Sigmoid colon (tissue), 7 donors: ENCODE measurements at regions of chr7 and their contacts with region 1.

Region 1: GRCh38 chr7:149261829-149262617 is at the start of gene ZNF783:
- DNase-seq: peak; percentile 93
- H3K4me3 ChIP-seq: peak within 1 kb of the TSS; percentile 28 to 75 (median 64)
- H3K27ac ChIP-seq: peak within 1 kb of the TSS; percentile 90 to 97 (median 93)
- H3K4me1 ChIP-seq: peaks cover 0 to 26% (median 22%) of the 10 kb centered on the region in 4 donors
- H3K27me3 ChIP-seq: no peaks in the 10 kb centered on the region
- CTCF ChIP-seq: peak in 2 of 4 experiments; percentile 31 to 87
- EP300 ChIP-seq: no peak
- POLR2A ChIP-seq: no peak
- total RNA-seq, gene ZNF783: 8.4 to 15.2 (median 11.3) TPM

Region 2: GRCh38 chr7:148983187-148984146 is 278.6 kb before region 1 on chr7:
- intact Hi-C with region 1: no loop called
- DNase-seq: no peak
- H3K4me3 ChIP-seq: peak overlapping the region; percentile 40 to 72 (median 60)
- H3K27ac ChIP-seq: peak overlapping the region; percentile 29 to 59 (median 48)
- H3K4me1 ChIP-seq: peaks cover 0 to 35% (median 27%) of the 10 kb centered on the region in 4 donors
- H3K27me3 ChIP-seq: no peaks in the 10 kb centered on the region
- CTCF ChIP-seq: no peak
- EP300 ChIP-seq: no peak
- POLR2A ChIP-seq: no peak

Region 3: DNA sequence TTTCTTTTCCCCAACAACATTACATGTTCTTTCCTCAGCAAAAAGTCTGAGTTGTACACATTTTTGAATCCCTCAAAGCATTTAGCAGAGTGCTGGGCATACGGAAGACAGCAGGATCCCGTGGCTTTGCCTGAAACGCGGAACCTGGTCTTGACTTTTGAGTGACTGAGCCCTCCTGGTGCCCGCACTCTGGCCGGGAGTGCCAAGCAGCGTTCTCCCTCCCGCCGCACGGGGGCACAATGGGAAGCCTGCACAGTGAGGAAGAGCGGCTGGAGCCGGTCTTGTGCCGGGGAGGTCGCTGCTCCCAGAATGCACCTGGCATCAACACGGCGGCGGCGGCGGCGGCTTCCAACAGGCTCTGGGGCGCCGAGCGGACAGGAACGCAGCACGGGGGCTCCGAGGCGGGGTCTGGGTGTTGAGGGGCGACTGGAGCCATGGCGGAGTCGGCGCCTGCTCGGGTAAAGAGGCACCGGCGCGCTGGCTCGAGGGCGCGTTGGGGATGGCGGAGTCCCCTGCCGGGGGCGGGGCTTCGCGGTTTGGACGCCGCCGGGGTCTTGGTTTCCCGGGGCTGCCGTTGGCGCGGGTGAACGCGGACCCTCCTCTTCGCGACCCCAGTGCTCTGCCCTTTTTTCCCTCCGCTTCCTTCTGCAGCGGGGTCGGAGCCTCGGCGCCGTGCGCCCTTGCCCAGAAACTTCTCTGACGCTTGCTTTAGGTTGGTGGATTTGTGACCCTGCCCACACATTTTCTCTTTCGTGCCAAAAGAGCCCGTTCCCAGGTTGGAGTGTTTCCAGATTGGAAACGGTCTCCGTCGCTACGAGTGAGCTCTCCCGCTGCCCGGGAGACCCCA is 22.5 kb before region 1 on chr7 and contains the start of gene ZNF212:
- intact Hi-C with region 1: loop called (anchors 2 kb)
- DNase-seq: peak; percentile 92
- H3K4me3 ChIP-seq: peak within 1 kb of the TSS; percentile 69 to 86 (median 78)
- H3K27ac ChIP-seq: peak within 1 kb of the TSS; percentile 64 to 81 (median 72)
- H3K4me1 ChIP-seq: peaks cover 0 to 22% (median 17%) of the 10 kb centered on the region in 4 donors
- H3K27me3 ChIP-seq: peaks cover 0 to 2% (median 0%) of the 10 kb centered on the region in 3 donors
- CTCF ChIP-seq: peak; percentile 64 to 80 (median 70)
- EP300 ChIP-seq: no peak
- POLR2A ChIP-seq: no peak
- total RNA-seq, gene ZNF212: 4.1 to 13.6 (median 5.7) TPM

Region 4: DNA sequence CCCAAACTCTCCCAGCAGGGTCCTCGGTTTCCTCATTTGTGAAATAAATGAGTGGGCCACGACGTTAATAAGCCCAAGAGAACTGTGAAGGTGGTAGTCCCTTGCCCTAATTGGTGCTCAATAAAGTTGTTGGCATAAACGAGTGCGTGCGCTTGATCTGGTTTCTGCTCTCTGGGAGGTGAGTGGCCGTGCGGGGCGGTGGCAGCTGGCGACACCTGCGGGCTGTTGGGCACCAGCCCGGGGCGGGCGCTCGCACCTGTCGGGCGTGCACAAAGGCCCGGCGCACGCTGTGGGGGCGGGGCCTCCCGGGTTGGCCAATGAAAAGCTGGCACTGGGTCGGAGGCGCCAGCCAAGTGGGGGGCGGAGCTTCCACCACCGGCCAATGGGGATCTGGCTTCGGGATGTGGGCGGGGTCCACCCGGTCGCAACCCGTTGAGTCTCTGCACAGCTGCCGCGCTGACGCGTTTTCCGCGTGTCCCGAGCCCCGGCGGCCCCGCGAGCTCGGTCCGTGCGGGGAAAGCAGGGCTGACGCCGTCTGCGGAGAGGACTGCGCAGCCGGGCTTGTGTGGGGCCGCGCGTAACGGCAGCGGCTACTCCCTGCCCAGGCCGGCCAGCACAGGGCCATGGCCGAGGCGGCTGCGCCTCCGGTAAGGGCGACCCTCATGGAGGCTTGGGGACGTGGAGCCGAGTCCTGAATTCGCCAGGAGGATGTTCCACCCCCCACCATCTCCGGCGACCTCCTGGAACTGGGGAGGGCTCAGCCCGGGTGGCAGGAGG is 23.0 kb after region 1 on chr7:
- intact Hi-C with region 1: no loop called
- DNase-seq: peak; percentile 96
- H3K4me3 ChIP-seq: peak overlapping the region; percentile 35 to 65 (median 53)
- H3K27ac ChIP-seq: peak overlapping the region; percentile 43 to 61 (median 52)
- H3K4me1 ChIP-seq: peaks cover 0 to 17% (median 8%) of the 10 kb centered on the region in 4 donors
- H3K27me3 ChIP-seq: no peaks in the 10 kb centered on the region
- CTCF ChIP-seq: no peak
- EP300 ChIP-seq: no peak
- POLR2A ChIP-seq: no peak

Region 5: DNA sequence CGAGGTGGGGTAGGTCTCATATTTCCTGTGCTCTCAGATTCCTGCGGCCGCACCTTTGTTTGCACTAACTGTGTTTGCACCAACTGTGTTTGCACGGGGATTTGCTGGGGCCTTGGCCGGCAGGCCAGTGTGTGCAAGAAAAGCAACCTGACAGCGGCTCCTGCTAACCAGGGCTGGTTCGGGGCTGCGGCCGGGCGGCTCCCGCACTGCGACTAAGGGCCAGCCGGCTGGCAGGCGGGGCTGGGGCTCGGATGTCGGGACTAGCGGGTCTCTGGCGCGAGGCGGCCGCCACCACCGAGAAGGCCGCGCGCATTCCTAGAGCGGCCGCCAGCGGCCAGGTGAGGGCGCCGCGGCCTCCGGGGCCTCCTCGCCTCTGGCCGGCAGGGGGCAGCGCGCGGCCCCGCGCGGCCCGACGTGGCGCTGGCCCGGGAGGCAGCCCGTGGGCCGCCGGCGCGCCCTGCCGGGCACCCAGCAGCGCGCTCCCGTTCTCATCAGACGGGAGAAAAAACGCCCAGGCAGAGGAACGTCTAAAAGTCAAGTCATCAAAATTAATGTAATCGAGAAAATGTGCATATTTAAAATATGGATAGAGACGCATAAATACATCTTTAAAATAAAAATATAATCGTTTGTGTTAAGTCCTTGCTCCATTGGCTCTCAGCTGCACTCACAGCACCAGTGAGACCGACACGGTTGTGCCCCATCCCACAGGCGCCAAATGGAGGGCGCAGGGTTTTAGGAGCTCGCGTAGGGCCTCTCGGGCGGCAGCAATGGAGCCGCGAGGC is 160.3 kb after region 1 on chr7:
- intact Hi-C with region 1: loop called (anchors 2 kb)
- DNase-seq: no peak
- H3K4me3 ChIP-seq: peak overlapping the region; percentile 29 to 52 (median 46)
- H3K27ac ChIP-seq: peak overlapping the region in 3 of 4 donors; percentile 5 to 27 (median 21)
- H3K4me1 ChIP-seq: peaks cover 0 to 16% (median 12%) of the 10 kb centered on the region in 4 donors
- H3K27me3 ChIP-seq: peaks cover 0 to 11% (median 0%) of the 10 kb centered on the region in 3 donors
- CTCF ChIP-seq: peak in 1 of 4 experiments; percentile 36
- EP300 ChIP-seq: no peak
- POLR2A ChIP-seq: no peak

Region 6: DNA sequence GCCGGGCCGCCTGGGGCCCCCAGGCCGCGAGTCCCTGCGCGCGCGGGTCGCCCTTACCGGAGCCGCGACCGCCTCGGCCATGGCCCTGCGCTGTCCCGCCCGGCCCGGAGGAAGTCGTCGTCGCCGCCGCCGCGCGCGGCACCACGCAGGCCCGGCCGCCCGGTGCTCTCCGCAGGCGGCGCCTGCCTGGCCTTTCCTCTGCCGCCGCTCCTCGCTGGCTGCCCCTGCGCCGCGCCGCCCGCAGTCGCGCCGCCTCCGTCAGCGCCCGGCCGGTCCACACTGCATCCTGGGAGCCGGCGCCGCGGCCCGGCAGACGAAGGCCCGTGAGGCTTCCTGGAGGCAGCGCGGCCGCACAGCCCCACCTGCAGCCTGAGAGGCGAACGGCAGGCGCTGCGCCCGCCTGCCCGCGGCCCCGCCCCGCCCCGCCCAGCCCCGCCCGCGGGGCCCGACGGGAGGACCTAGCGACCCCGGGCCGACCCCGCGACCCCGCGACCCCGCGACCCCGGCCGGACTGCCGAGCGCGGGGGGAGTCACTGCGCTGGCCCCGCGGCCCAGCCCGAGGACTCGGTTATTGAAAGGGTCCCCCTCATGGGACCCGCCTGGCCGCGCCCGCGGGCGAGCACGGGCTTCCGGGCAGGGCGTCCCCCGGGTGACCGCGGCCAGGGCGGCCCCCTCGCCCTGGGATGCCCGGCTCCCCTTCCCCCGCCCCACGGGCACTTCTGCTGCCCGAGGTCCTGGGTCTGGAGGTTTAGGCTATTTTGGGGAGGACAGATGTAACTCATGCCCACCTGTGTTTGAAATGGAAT is 235.6 kb after region 1 on chr7 and contains the start of gene ZNF746:
- intact Hi-C with region 1: loop called (anchors 1 kb)
- DNase-seq: peak; percentile 89
- H3K4me3 ChIP-seq: peak within 1 kb of the TSS; percentile 61 to 93 (median 84)
- H3K27ac ChIP-seq: peak within 1 kb of the TSS; percentile 84 to 96 (median 94)
- H3K4me1 ChIP-seq: peaks cover 0 to 24% (median 20%) of the 10 kb centered on the region in 4 donors
- H3K27me3 ChIP-seq: no peaks in the 10 kb centered on the region
- CTCF ChIP-seq: peak in 1 of 4 experiments; percentile 47
- EP300 ChIP-seq: no peak
- POLR2A ChIP-seq: no peak
- total RNA-seq, gene ZNF746: 16.4 to 18.9 (median 17.7) TPM

Region 7: GRCh38 chr7:149624419-149625339 is 362.7 kb after region 1 on chr7:
- intact Hi-C with region 1: loop called (anchors 10 kb)
- DNase-seq: peak; percentile 96
- H3K4me3 ChIP-seq: peak overlapping the region; percentile 82 to 100 (median 93)
- H3K27ac ChIP-seq: peak overlapping the region; percentile 89 to 95 (median 92)
- H3K4me1 ChIP-seq: peaks cover 0 to 30% (median 23%) of the 10 kb centered on the region in 4 donors
- H3K27me3 ChIP-seq: no peaks in the 10 kb centered on the region
- CTCF ChIP-seq: peak; percentile 49 to 98 (median 82)
- EP300 ChIP-seq: no peak
- POLR2A ChIP-seq: peak; percentile 16 to 32

Region 8: GRCh38 chr7:150404805-150405583 is 1143.0 kb after region 1 on chr7:
- intact Hi-C with region 1: loop called (anchors 10 kb)
- DNase-seq: peak; percentile 96
- H3K4me3 ChIP-seq: peak overlapping the region; percentile 68 to 74 (median 74)
- H3K27ac ChIP-seq: peak overlapping the region; percentile 95 to 99 (median 96)
- H3K4me1 ChIP-seq: peaks cover 0 to 36% (median 32%) of the 10 kb centered on the region in 4 donors
- H3K27me3 ChIP-seq: no peaks in the 10 kb centered on the region
- CTCF ChIP-seq: peak in 1 of 4 experiments; percentile 35
- EP300 ChIP-seq: no peak
- POLR2A ChIP-seq: peak; percentile 51 to 65